H1 (cell line): ENCODE measurements at regions of chr17 and their contacts with region 1.

Region 1: DNA sequence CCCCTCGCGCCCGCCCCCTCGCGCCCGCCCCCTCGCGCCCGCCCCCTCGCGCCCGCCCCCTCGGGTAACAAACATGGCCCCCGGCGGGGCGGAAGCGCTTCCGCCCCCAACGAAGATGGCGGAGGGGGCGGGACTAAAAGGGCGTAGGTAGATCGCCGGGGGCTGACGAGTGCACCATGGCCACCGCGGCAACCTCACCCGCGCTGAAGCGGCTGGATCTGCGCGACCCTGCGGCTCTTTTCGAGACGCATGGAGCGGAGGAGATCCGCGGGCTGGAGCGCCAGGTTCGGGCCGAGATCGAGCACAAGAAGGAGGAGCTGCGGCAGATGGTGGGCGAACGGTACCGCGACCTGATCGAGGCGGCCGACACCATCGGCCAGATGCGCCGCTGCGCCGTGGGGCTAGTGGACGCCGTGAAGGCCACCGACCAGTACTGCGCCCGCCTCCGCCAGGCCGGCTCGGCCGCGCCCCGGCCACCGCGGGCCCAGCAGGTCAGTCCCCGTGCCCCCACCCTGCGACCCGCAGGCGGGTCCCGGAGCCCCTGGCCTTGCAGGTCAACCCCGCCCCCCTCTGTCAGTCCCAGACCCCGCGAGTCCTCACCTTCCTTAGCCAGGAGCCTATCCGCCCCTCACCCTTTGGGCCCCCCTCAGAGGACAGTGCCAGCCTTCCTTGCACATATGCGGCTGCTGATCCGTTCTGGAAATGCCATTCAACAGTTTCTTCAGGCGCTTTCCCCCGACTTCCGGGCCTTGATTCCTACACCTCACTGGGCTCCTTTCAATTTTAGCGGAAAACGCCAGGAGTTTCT is at the start of gene COG1:
- DNase-seq: peak in 1 of 2 experiments; percentile 80
- H3K4me3 ChIP-seq: peak within 1 kb of the TSS; percentile 87 to 95 (median 95)
- H3K27ac ChIP-seq: peak within 1 kb of the TSS; percentile 86
- H3K4me1 ChIP-seq: peaks cover 0 to 8% (median 2%) of the 10 kb centered on the region in 4 experiments; a peak in 2 of 7 replicates
- H3K27me3 ChIP-seq: no peaks in the 10 kb centered on the region
- CTCF ChIP-seq: no peak; a peak in 1 of 4 replicates
- EP300 ChIP-seq: no peak
- POLR2A ChIP-seq: peak in 1 of 2 experiments; percentile 41; a peak in 1 of 3 replicates
- RAD21 ChIP-seq: no peak
- total RNA-seq, gene COG1: 18.7 and 19.5 TPM in 2 replicates

Region 2: GRCh38 chr17:72715906-72716572 is 477.1 kb before region 1 on chr17:
- CTCF ChIA-PET with region 1: interaction called, 19 read pairs
- POLR2A ChIA-PET with region 1: interaction called, 4 read pairs
- DNase-seq: no peak
- H3K4me3 ChIP-seq: no peak overlapping the region
- H3K27ac ChIP-seq: no peak overlapping the region
- H3K4me1 ChIP-seq: peaks cover 0 to 11% (median 2%) of the 10 kb centered on the region in 4 experiments; a peak in 4 of 7 replicates
- H3K27me3 ChIP-seq: no peaks in the 10 kb centered on the region
- CTCF ChIP-seq: no peak
- EP300 ChIP-seq: no peak
- POLR2A ChIP-seq: no peak
- RAD21 ChIP-seq: no peak

Region 3: GRCh38 chr17:73118951-73119391 is 74.1 kb before region 1 on chr17:
- CTCF ChIA-PET with region 1: no interaction called
- POLR2A ChIA-PET with region 1: no interaction called
- DNase-seq: no peak
- H3K4me3 ChIP-seq: no peak overlapping the region
- H3K27ac ChIP-seq: no peak overlapping the region
- H3K4me1 ChIP-seq: peaks cover 0 to 4% (median 3%) of the 10 kb centered on the region in 4 experiments; a peak in 2 of 7 replicates
- H3K27me3 ChIP-seq: no peaks in the 10 kb centered on the region
- CTCF ChIP-seq: no peak
- EP300 ChIP-seq: no peak
- POLR2A ChIP-seq: no peak
- RAD21 ChIP-seq: no peak

Region 4: DNA sequence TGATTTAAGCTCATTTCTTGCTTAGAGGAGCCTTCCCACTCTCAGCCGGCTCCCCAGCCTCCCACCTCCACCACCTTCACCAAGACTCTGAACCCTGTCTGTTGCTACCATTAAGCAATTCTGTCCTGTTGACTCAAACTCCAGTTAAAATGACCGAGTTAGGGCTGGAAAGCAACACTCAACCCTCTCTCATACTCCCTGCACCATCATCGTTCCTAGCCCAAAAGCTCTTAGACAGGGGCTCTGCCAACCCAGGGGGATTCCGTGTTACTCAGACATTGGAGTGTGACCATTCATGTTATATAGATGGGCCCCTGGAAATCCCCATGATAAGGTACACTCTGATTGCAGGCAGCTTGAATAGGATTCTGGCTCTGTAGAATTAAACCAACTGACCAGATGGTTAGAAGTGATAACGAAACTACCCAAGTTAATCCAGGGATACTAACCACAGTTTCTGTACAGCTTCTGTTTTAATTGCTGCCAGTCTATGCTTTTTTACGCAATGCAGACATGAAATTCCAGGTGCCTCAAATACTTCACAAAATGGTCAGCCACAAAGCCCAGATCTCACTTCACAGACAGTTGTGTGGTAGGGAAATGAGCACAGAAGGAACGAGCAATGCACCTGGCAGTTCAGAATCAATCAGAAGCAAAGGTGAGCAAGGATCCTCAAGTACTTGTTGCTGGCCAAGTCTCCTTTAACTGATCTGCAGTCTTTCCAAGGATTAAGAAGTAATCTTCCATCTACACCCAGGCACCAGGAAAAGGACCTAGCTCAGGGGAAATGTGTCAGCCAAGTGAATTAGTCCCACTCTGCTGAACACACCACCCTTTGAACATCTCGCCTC is 26.1 kb before region 1 on chr17:
- CTCF ChIA-PET with region 1: interaction called, 57 read pairs
- POLR2A ChIA-PET with region 1: interaction called, 8 read pairs
- DNase-seq: no peak
- H3K4me3 ChIP-seq: peak overlapping the region in 1 of 4 experiments; percentile 71; a peak in 2 of 8 replicates
- H3K27ac ChIP-seq: no peak overlapping the region
- H3K4me1 ChIP-seq: peaks cover 4 to 20% (median 10%) of the 10 kb centered on the region in 4 experiments
- H3K27me3 ChIP-seq: peaks cover 12 to 48% (median 46%) of the 10 kb centered on the region in 4 experiments
- CTCF ChIP-seq: no peak
- EP300 ChIP-seq: no peak
- POLR2A ChIP-seq: no peak
- RAD21 ChIP-seq: no peak

Region 5: DNA sequence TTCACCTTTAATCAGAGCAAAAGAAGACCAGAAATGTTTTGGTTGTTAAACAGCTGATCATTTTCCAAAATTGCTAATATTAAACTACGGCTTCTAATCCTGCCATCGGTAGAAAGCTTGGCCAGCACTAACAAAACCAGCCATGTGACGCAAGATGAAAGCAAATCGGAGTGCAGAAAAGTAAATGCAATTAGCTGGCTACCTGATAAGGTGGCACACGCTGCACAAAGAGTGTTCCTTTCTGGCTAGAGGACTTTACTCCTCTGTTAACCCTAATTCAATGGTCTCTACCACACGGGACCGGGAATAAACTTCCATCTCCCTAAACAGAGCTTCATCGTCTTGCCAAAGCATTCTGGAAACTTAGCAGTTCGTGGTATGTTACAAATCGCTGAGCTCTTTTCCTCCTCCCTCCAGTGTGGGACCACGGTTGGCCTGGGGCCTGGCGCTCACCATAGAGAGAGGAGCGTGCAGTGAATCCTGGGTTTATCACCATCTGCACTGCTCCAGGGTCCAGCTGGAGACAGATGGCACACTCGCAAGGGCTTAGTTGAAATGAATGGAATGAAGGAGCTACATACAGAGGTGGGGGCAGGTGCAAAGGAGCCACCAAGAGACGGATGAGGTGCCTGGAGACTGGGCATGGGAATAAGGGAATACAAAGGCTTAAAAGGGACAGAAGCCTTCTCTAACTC is 10.3 kb before region 1 on chr17:
- CTCF ChIA-PET with region 1: interaction called, 32 read pairs
- POLR2A ChIA-PET with region 1: interaction called, 7 read pairs
- DNase-seq: no peak
- H3K4me3 ChIP-seq: no peak overlapping the region
- H3K27ac ChIP-seq: no peak overlapping the region
- H3K4me1 ChIP-seq: no peaks in the 10 kb centered on the region
- H3K27me3 ChIP-seq: no peaks in the 10 kb centered on the region
- CTCF ChIP-seq: no peak
- EP300 ChIP-seq: no peak
- POLR2A ChIP-seq: no peak
- RAD21 ChIP-seq: no peak

Region 6: DNA sequence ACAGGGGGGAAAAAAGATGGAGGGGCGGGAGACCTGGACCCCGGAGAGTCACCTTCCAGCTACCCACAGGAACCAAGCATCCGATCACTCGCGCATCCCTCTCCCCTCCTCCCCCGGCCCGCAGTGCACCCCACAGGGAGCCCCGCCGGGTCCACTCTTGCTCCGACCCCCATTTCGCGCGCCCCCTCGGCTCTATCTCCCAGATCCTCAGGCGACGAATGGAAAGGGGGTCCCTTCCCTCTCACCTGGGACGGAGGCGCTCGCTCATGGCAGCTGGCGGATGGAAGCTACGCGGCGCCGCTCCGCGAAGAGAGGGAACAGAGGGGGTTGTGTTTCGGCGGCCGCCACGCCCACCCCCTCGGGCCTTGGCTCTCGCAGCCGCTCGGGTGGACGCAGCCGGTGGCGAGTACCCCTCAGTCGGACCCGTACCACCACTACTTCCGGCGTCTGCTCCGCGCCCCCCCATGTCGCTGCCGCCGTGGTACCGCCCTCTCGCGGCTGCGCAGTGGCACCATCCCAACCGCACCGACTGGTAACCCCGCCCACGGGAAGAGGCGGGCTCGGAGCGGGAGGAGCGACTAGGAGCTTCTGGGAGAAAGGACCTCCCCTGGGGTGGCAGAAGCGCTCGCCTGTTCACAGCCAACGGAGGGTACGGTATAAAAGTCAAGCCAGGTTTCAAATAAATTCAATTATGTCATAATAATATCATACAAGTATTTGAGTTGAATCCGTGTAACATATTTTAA is 38.9 kb after region 1 on chr17:
- CTCF ChIA-PET with region 1: interaction called, 8 read pairs
- POLR2A ChIA-PET with region 1: interaction called, 18 read pairs
- DNase-seq: peak; percentile 93 to 99
- H3K4me3 ChIP-seq: peak overlapping the region; percentile 90 to 94 (median 92)
- H3K27ac ChIP-seq: peak overlapping the region; percentile 74
- H3K4me1 ChIP-seq: peaks cover 0 to 9% (median 4%) of the 10 kb centered on the region in 4 experiments; a peak in 5 of 7 replicates
- H3K27me3 ChIP-seq: no peaks in the 10 kb centered on the region
- CTCF ChIP-seq: peak in 2 of 3 experiments; percentile 15 to 24; a peak in 1 of 4 replicates
- EP300 ChIP-seq: peak in 1 of 2 experiments; percentile 41; a peak in 1 of 3 replicates
- POLR2A ChIP-seq: peak; percentile 40 to 61
- RAD21 ChIP-seq: no peak

Region 7: DNA sequence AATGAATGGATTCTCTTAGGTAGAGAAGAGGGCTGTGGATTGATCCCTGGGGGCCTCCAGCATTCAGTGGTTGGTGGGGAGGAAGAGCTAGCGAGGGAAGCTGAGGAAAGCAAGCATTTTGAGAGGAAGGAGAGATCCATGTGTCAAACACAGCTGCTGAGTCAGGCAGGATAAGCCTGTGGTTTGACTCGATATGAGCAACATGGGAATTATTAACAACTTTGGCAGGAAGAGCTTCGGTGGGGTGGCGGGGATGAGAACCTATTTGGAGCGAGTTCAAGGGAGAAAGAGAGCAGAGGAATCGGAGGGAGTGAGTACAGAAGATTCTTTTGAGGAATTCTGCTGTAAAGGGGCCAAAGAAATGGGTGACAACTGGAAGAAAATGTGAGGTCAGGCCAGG is 178.2 kb after region 1 on chr17:
- CTCF ChIA-PET with region 1: interaction called, 12 read pairs
- POLR2A ChIA-PET with region 1: no interaction called
- DNase-seq: no peak
- H3K4me3 ChIP-seq: no peak overlapping the region
- H3K27ac ChIP-seq: no peak overlapping the region
- H3K4me1 ChIP-seq: peaks cover 0 to 7% (median 2%) of the 10 kb centered on the region in 4 experiments; a peak in 4 of 7 replicates
- H3K27me3 ChIP-seq: no peaks in the 10 kb centered on the region
- CTCF ChIP-seq: no peak
- EP300 ChIP-seq: no peak
- POLR2A ChIP-seq: no peak
- RAD21 ChIP-seq: no peak